CD8-positive, alpha-beta memory T cell (primary cell): ENCODE measurements at regions of chr17 and their contacts with region 1.

Region 1: DNA sequence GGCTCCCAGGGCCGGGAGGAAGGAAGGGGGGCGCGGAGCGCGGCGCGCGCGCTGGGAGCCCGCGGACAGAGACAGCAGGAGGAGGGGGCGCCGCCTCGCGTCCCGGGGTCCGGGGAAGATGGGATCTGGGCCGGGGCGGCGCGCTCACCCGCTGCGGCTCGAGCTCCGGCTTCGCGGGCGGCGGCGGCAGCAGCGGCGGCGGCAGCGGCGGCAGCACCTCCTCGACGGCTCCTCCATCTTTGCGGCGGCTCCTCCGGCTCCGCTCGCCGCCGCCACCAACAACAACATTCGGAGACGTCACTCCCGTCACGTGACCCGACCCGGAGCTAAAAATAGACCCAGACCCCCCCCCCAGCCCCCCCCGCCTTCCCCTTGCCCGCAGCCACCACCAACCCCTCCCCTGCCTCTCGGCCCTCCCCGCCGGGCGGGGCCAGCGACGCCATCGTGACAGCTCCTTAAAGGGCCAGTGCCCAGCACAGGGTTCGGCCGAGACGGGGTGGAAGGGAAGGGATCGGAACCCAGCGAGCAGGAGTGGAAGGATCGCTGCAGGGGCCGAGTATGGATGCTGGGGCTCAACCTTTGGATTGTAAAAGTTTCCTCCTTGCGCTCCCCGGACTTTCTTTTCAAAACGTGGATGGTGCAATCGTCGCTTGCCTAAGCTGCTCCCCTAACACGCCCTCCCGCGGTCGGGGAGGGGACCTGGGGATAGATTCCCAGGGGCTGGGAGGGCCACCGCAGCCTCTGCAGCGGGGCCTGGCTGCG is at the start of gene HDAC5:
- DNase-seq: peak; percentile 91 to 97 (median 92)
- H3K4me3 ChIP-seq: peak within 1 kb of the TSS; percentile 91
- H3K4me3 Mint-ChIP-seq: peak within 1 kb of the TSS; percentile 93 to 98 (median 96)
- H3K27ac ChIP-seq: peak within 1 kb of the TSS; percentile 81
- H3K27ac Mint-ChIP-seq: peak within 1 kb of the TSS; percentile 94 to 98 (median 96)
- H3K4me1 ChIP-seq: peaks cover 24% of the 10 kb centered on the region
- H3K4me1 Mint-ChIP-seq: peaks cover 35 to 54% (median 46%) of the 10 kb centered on the region in 3 donors
- H3K27me3 ChIP-seq: no peaks in the 10 kb centered on the region
- H3K27me3 Mint-ChIP-seq: peaks cover under 1 to 3% of the 10 kb centered on the region in 2 donors
- total RNA-seq, gene HDAC5: 22.7 to 24.2 TPM

Region 2: GRCh38 chr17:44070455-44071197 is 52.9 kb before region 1 on chr17 and contains the start of gene G6PC3:
- CTCF ChIA-PET with region 1: interaction called, 4 read pairs
- POLR2A ChIA-PET with region 1: interaction called, 11 read pairs
- DNase-seq: peak; percentile 64 to 81 (median 72)
- H3K4me3 ChIP-seq: peak within 1 kb of the TSS; percentile 77
- H3K4me3 Mint-ChIP-seq: peak within 1 kb of the TSS; percentile 91 to 98 (median 94)
- H3K27ac ChIP-seq: peak within 1 kb of the TSS; percentile 54
- H3K27ac Mint-ChIP-seq: peak within 1 kb of the TSS; percentile 94 to 97 (median 97)
- H3K4me1 ChIP-seq: peaks cover 33% of the 10 kb centered on the region
- H3K4me1 Mint-ChIP-seq: peaks cover 34 to 53% (median 40%) of the 10 kb centered on the region in 3 donors
- H3K27me3 ChIP-seq: no peaks in the 10 kb centered on the region
- H3K27me3 Mint-ChIP-seq: peaks cover 0 to 3% of the 10 kb centered on the region in 2 donors
- total RNA-seq, gene G6PC3: 37.1 to 38.3 TPM

Region 3: GRCh38 chr17:44110823-44111633 is 12.5 kb before region 1 on chr17:
- CTCF ChIA-PET with region 1: interaction called, 12 read pairs
- POLR2A ChIA-PET with region 1: interaction called, 9 read pairs
- DNase-seq: peak in 4 of 5 donors; percentile 27 to 77 (median 50)
- H3K4me3 ChIP-seq: no peak overlapping the region
- H3K4me3 Mint-ChIP-seq: peak overlapping the region in 4 of 7 donors; percentile 28 to 49 (median 40)
- H3K27ac ChIP-seq: no peak overlapping the region
- H3K27ac Mint-ChIP-seq: peak overlapping the region in 2 of 8 donors; percentile 68 to 85
- H3K4me1 ChIP-seq: peaks cover 22% of the 10 kb centered on the region
- H3K4me1 Mint-ChIP-seq: peaks cover 19 to 55% (median 25%) of the 10 kb centered on the region in 3 donors
- H3K27me3 ChIP-seq: no peaks in the 10 kb centered on the region
- H3K27me3 Mint-ChIP-seq: no peaks in the 10 kb centered on the region

Region 4: DNA sequence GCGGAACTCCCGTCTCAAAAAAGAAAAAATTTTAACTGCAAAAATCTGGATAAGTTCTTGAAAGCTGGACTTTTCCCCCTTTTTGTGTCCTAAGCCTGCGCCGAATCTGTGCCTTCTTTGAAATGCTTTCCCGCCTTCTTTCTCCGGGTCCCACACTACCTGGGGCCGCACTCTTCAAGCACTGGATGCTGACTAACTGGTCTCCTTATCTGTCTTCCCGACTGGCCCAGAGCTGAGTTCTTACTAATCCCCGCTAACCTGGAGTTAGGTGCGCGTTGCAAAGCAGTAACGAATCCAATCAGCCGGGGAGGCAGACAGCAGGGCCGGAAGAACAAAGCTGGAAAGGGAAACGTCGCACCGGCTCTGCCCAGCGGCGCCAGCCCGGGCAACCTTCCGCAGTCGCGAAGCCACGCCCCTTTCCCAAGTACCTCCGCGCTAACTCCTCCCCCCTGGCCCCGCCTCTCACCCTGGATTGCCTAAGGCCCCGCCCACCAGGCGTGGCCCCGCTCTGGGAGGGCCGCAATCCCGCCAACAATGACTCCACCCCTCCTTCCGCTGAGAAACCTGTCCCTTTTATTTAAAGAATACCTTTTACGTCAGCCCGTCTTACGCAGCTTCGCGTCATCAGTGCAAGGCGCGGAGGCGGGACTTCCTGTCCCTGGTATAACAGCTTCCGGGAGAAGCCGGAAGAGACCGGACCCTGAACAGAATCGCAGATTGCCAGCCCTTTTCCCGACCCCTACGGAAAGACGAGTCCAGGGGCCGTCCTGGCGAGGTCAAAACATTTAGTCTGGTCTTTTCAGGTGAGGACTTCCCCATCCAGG is 63.0 kb after region 1 on chr17 and contains the start of gene TMUB2:
- CTCF ChIA-PET with region 1: no interaction called
- POLR2A ChIA-PET with region 1: interaction called, 35 read pairs
- DNase-seq: peak; percentile 99 to 100 (median 99)
- H3K4me3 ChIP-seq: peak within 1 kb of the TSS; percentile 100
- H3K4me3 Mint-ChIP-seq: peak within 1 kb of the TSS; percentile 90 to 100 (median 99)
- H3K27ac ChIP-seq: peak within 1 kb of the TSS; percentile 100
- H3K27ac Mint-ChIP-seq: peak within 1 kb of the TSS; percentile 89 to 100 (median 100)
- H3K4me1 ChIP-seq: peaks cover 35% of the 10 kb centered on the region
- H3K4me1 Mint-ChIP-seq: peaks cover 44 to 58% (median 56%) of the 10 kb centered on the region in 3 donors
- H3K27me3 ChIP-seq: no peaks in the 10 kb centered on the region
- H3K27me3 Mint-ChIP-seq: peaks cover 0 to 2% of the 10 kb centered on the region in 2 donors
- total RNA-seq, gene TMUB2: 20.8 to 22.5 TPM

Region 5: DNA sequence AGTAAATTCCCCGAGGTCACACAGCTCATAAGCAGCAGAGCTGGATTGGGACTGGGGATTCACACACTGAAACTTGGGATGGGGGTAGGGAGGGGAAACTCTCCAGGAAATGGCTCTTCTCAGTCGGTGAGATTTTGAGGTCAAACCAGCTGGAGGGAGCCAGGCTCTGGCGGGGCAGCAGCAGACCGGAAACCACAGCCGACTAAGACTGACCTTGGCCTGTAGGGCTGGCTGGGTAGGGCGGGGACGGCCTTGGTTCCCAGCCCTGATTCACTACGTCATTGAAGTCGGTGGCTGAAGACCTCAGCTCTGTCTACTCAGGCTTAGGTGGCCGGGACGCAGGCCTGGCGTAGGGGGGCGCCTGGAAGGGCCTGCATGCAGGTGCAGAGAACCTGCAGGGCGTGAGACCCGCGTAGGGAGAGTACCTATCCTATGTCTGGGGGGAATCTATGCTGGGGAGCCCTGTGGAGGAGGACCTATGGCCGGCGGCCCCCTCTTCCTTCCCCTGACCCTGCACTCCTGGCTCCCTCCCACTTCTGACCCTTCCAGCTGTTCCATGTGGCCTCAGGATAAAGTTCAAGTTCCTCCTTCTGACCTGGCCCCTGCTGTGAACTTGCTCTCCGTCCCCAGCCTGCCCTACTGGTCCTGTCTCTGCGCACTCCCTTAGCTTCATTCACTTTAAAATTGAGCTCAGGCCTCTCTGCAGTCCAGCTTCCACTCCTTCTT is 156.3 kb after region 1 on chr17:
- CTCF ChIA-PET with region 1: no interaction called
- POLR2A ChIA-PET with region 1: no interaction called
- DNase-seq: peak in 2 of 5 donors; percentile 8 to 10
- H3K4me3 ChIP-seq: no peak overlapping the region
- H3K4me3 Mint-ChIP-seq: peak overlapping the region in 2 of 7 donors; percentile 6 to 18
- H3K27ac ChIP-seq: peak overlapping the region; percentile 6
- H3K27ac Mint-ChIP-seq: peak overlapping the region in 4 of 8 donors; percentile 17 to 82 (median 50)
- H3K4me1 ChIP-seq: no peaks in the 10 kb centered on the region
- H3K4me1 Mint-ChIP-seq: peaks cover 9 to 13% (median 10%) of the 10 kb centered on the region in 3 donors
- H3K27me3 ChIP-seq: no peaks in the 10 kb centered on the region
- H3K27me3 Mint-ChIP-seq: peaks cover 0 to 3% of the 10 kb centered on the region in 2 donors